ENCODE measurements at regions of chr12 and their contacts with region 1.

Region 1: GRCh38 chr12:76037130-76038103 is 5.8 kb upstream of the PHLDA1 start:
- DNase-seq: peak; percentile 87
- H3K4me3 ChIP-seq: peak overlapping the region in 1 of 3 experiments; percentile 45
- H3K27ac ChIP-seq: peak overlapping the region; percentile 88
- H3K4me1 ChIP-seq: peaks cover 26% of the 10 kb centered on the region
- H3K27me3 ChIP-seq: no peaks in the 10 kb centered on the region
- CTCF ChIP-seq: peak; percentile 68 to 79
- POLR2A ChIP-seq: peak; percentile 60

Region 2: DNA sequence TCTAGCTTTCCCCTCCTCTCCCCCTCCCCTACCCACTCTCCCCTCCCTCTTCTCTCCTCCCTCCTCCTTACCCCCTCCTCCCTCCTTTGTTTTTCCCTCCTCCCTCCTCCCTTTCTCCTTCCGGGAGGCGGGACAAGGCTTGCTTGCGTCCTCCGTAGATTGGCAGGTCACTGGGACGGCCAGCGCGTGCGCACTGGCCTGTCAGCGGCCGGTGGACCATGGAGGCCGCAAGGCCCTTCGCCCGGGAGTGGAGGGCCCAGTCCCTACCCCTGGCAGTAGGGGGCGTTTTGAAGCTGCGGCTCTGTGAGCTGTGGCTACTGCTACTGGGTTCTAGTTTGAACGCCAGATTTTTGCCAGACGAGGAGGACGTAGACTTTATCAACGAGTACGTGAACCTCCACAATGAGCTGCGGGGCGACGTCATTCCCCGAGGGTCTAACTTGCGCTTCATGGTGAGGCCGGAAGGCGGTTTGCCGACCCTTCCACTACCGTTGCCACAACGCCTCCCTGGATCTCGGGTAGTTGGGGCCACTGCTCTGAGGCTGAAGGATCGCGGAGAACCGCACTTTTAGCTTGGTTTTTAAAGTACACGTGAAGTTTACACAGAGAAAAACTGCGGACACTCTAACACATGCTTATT is 646.4 kb before region 1 on chr12 and contains the start of gene GLIPR1L2:
- CTCF ChIA-PET with region 1: no interaction called
- POLR2A ChIA-PET with region 1: no interaction called
- dilution Hi-C with region 1: no loop called
- intact Hi-C with region 1: loop called (anchors 1 kb)
- DNase-seq: peak; percentile 98
- H3K4me3 ChIP-seq: peak within 1 kb of the TSS; percentile 2 to 63 (median 50)
- H3K27ac ChIP-seq: peak within 1 kb of the TSS; percentile 31
- H3K4me1 ChIP-seq: peaks cover 29% of the 10 kb centered on the region
- H3K27me3 ChIP-seq: no peaks in the 10 kb centered on the region
- CTCF ChIP-seq: peak; percentile 89 to 94
- POLR2A ChIP-seq: no peak
- total RNA-seq, gene GLIPR1L2: not detected in 2 replicates

Region 3: DNA sequence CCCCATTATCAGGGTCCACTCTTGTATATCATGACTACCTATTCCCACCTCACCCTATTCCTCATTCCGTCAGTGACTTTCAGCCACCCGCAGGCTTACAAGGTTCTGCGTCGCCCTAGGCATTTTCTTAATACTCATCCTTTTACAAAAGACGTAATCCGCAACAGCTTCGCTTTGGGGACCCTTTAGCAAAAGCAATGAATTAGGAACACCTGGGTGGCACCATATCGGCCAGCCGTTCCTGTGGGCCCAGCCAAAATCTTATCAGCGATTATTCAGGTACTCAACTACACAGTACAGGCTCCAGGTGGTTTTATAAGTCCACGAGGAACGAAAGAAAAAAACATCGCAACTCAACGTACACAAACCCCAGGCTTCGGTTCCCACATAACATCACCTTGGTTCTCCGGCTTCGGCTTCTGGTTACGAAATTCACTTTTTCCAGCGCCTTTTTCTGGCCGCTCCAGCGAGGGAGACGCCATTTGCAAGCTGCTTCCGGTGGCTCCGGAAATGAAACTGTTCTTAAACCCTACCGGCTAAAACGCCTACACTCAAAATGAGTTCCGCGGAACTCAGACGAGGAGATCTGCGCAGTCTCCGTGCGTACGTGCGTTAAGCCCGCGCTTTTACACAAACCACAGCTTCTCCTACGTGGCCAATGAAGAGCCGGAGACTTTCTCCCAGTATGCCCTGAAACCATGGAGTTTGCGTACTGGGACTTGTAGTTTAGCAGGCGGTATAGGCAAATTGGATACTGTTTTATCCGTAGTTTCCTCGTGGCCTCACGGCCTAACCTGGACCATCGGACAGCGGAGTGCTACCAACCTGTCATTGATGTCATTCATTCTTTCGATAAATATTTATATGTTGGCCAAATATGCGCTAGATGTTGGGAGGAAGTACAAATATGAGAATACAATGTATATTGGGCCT is 526.0 kb before region 1 on chr12 and contains the start of gene KRR1:
- CTCF ChIA-PET with region 1: interaction called, 7 read pairs
- POLR2A ChIA-PET with region 1: no interaction called
- dilution Hi-C with region 1: loop called (anchors 25 kb)
- intact Hi-C with region 1: loop called (anchors 1 kb)
- DNase-seq: peak; percentile 99
- H3K4me3 ChIP-seq: peak within 1 kb of the TSS; percentile 91 to 98 (median 93)
- H3K27ac ChIP-seq: peak within 1 kb of the TSS; percentile 91
- H3K4me1 ChIP-seq: peaks cover 12% of the 10 kb centered on the region
- H3K27me3 ChIP-seq: no peaks in the 10 kb centered on the region
- CTCF ChIP-seq: no peak
- POLR2A ChIP-seq: peak; percentile 66
- total RNA-seq, gene KRR1: 49.3 and 53.4 TPM in 2 replicates

Region 4: DNA sequence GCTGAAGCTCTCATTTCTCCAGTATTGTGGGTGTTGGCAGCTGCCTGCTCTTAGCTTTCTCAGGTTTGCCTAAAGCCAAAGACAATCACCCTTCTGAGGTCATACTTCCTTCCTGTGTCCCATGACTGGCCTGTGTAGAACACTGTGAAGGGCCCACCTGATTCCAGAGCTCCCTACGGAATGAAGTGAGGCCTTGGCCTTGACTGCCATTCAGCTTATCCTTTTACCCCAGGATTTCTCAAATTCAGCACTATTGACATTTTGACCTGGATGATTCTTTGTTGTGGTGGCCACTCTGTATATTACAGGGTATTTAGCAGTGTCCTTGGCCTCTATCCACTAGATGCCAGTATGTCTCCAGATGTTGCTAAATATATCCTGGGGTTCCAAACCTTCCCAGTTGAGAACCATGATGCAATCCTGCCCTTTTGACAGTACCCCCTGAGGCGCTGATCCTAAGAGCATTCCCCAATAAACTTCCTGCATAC is 413.7 kb before region 1 on chr12:
- CTCF ChIA-PET with region 1: interaction called, 5 read pairs
- POLR2A ChIA-PET with region 1: no interaction called
- dilution Hi-C with region 1: no loop called
- intact Hi-C with region 1: loop called (anchors 1 kb)
- DNase-seq: peak; percentile 53
- H3K4me3 ChIP-seq: no peak overlapping the region
- H3K27ac ChIP-seq: peak overlapping the region; percentile 43
- H3K4me1 ChIP-seq: peaks cover 9% of the 10 kb centered on the region
- H3K27me3 ChIP-seq: no peaks in the 10 kb centered on the region
- CTCF ChIP-seq: no peak
- POLR2A ChIP-seq: no peak